ENCODE measurements at regions of chr11 and their contacts with region 1.

Region 1: GRCh38 chr11:113289431-113290187 is 24.8 kb upstream of the TTC12 start:
- DNase-seq: peak; percentile 47
- H3K4me3 ChIP-seq: no peak overlapping the region
- H3K27ac ChIP-seq: no peak overlapping the region
- H3K4me1 ChIP-seq: no peaks in the 10 kb centered on the region
- CTCF ChIP-seq: peak; percentile 84

Region 2: DNA sequence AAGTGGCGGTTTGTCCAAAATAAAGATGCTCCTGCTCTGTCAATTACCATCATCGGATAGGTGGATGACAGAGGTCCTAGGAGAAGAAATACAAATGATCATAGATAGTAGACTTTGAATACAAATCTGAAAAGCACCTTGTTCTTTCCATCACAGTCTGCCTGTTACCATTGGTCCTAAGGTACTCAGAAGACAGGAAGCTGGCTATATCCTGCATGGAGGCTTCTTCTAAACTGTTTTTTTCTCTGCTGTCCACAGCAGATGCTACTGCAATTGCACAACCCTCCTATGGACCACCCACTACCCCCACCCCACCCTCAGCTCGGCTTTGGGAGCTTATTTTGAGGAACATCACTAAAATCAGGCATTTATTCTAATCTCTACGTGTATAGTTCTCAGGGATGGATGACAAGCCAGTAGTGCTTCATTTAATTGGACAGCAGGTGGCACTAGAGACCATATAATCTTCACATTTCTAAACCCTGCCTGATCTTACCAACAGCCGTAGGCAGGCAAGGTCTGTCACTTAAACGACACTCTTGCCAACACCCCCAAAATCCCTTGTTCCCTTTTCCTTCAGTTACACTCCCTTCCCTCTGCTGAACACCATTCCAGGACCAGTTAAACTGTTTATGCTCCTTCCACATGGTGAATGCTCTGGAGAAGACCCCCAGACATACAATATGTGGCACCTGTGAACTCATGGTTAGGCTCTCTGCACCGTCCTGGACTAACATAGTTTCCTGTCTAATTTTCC is 1070.0 kb before region 1 on chr11:
- CTCF ChIA-PET with region 1: no interaction called
- POLR2A ChIA-PET with region 1: no interaction called
- intact Hi-C with region 1: loop called (anchors 1 kb)
- DNase-seq: peak; percentile 79
- H3K4me3 ChIP-seq: no peak overlapping the region
- H3K27ac ChIP-seq: no peak overlapping the region
- H3K4me1 ChIP-seq: no peaks in the 10 kb centered on the region
- CTCF ChIP-seq: peak; percentile 88

Region 3: DNA sequence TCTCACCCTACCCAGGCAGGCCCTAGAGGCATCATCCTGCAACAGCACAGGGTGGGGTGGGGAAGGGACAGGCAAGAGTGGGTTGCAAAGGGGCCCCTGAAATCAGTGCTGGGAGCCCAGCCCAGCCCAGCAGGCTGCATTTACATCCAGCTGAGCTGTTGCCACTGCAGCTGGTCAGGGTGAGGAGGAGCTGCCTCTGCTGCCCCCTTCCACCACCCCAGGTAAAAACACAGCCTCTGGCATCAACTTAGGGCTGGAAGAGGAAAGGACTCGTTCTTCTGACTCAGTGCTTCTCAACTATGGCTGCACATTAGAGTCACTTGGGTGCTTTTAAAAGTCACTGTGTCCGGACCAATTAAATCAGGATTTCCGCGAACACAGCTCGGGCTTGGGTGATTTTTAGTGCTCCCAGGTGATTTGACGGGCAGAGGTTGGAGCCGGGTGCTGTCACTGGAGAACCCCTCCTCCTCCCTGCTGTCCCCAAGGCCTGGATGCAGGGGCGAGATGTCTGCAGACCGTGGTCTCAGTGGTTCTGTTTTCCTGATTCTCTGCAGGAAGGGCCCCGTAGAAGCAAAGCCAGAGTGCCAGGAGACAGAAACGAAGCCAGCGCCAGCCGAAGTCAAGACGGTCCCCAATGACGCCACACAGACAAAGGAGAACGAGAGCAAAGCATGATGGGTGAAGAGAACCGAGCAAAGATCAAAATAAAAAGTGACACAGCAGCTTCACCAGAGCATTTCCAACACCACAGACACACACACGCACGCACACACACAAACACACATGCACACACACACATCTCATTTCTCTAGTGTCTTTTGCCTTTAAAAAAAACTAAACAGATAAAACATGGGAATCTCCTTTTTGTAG is 14.7 kb before region 1 on chr11:
- CTCF ChIA-PET with region 1: no interaction called
- POLR2A ChIA-PET with region 1: no interaction called
- intact Hi-C with region 1: no loop called
- DNase-seq: no peak
- H3K4me3 ChIP-seq: no peak overlapping the region
- H3K27ac ChIP-seq: no peak overlapping the region
- H3K4me1 ChIP-seq: no peaks in the 10 kb centered on the region
- CTCF ChIP-seq: no peak

Region 4: DNA sequence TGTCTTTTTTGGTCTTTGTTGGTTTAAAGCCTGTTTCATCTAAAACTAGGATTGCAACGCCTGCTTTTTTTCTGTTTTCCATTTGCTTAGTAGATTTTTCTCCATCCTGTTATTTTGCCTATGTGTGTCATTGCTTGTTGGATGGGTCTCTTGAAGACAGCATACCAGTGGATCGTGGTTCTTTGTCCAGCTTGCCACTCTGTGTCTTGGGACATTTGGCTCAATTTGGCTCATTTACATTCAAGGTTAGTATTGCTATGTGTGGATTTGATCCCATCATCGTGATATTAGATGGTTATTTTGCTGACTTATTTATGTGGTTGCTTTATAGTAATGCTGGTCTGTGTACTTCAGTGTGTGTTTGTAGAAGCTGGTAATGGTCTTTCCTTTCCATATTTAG is 66.6 kb after region 1 on chr11:
- CTCF ChIA-PET with region 1: no interaction called
- POLR2A ChIA-PET with region 1: no interaction called
- intact Hi-C with region 1: no loop called
- DNase-seq: no peak
- H3K4me3 ChIP-seq: no peak overlapping the region
- H3K27ac ChIP-seq: no peak overlapping the region
- H3K4me1 ChIP-seq: no peaks in the 10 kb centered on the region
- CTCF ChIP-seq: no peak

Region 5: GRCh38 chr11:113457784-113458183 is 168.2 kb after region 1 on chr11:
- CTCF ChIA-PET with region 1: no interaction called
- POLR2A ChIA-PET with region 1: no interaction called
- intact Hi-C with region 1: no loop called
- DNase-seq: no peak
- H3K4me3 ChIP-seq: no peak overlapping the region
- H3K27ac ChIP-seq: no peak overlapping the region
- H3K4me1 ChIP-seq: no peaks in the 10 kb centered on the region
- CTCF ChIP-seq: no peak

Measured in OCI-LY7 (cell line).